ENCODE measurements at regions of chr11 and their contacts with region 1.

Region 1: GRCh38 chr11:62081378-62082291 is 42.2 kb upstream of the INCENP start:
- DNase-seq: peak; percentile 77
- CTCF ChIP-seq: peak; percentile 83

Region 2: GRCh38 chr11:61871158-61871597 is 210.5 kb before region 1 on chr11:
- CTCF ChIA-PET with region 1: interaction called, 57 read pairs
- POLR2A ChIA-PET with region 1: interaction called, 4 read pairs
- DNase-seq: peak; percentile 87
- CTCF ChIP-seq: peak; percentile 93

Region 3: GRCh38 chr11:61899146-61899841 is 182.3 kb before region 1 on chr11:
- CTCF ChIA-PET with region 1: interaction called, 424 read pairs
- POLR2A ChIA-PET with region 1: no interaction called
- DNase-seq: peak; percentile 95
- CTCF ChIP-seq: peak; percentile 100

Region 4: DNA sequence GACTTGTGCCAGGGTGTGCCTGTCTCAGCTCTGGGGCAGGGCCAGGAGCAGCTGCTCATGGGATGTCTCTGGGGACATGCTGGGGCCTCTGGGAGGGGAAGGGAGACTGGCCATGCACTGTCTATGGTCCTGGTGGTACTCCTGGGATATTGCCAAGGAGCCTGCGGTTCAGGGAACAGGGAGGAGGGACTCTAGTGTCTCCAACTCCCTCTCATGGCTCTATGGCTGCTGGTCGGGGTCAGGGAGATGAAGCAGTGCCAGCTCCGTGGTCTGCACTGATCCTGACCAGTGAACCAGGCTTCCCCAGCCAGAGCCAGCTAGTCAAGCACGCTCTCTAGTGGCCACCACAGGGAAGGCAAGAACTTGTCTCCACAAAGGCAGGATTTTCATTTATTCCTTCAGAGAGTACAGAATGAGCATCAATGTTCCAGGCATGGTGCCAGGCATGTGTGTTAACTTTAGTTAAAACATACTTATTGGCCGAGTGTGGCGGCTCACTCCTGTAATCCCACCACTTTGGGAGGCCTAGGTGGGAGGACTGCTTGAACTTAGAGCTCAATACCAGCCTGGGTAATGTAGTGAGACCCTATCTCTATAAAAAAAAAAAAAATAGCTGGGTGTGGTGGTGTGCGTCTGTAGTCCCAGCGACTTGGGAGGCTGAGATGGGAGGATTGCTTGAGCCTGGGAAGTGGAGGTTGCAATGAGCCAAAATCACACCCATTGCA is 134.0 kb before region 1 on chr11:
- CTCF ChIA-PET with region 1: interaction called, 104 read pairs
- POLR2A ChIA-PET with region 1: no interaction called
- DNase-seq: peak; percentile 87
- CTCF ChIP-seq: peak; percentile 94

Region 5: GRCh38 chr11:61985885-61986345 is 95.7 kb before region 1 on chr11:
- CTCF ChIA-PET with region 1: interaction called, 16 read pairs
- POLR2A ChIA-PET with region 1: no interaction called
- DNase-seq: no peak
- CTCF ChIP-seq: no peak

Region 6: DNA sequence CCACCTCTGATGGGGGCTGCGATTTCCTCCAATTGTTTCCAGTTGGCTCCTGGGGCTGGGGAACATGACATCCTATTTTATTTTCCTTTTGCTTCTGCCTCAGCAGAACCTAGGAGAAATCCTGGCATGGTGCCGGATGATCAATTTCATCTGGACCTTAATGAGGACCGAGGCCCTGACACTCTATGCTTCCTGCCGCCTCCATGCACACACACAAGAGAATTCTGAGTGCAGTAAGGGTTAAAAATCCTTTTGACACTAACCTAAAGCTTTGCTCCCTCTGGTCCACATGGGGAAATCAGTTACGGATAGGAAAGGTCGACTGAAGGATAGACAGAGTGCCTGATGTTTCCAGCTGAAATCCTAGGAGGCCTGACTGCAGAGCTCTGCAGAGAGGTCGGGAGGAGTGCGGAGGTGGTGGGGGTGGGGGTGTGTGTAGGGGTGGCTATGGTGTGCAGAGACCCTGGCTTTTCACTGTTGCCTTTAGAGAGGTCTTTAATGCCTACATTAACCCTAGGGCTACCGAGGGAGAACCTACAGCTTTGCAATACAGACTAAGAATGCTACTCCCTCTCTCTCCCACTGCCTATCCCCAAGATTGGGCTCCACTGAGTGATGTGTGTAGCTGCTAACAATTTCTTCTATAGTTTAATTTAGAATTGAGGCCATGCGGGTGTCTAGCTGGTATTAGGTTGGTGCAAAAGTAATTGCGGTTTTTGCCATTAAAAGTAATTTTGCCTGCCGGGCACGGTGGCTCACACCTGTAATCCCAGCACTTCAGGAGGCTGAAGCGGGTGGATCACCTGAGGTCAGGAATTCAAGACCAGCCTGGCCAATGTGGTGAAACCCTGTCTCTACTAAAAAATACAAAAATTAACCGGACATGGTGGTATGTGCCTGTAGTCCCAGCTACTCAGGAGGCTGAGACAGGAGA is 11.4 kb before region 1 on chr11:
- CTCF ChIA-PET with region 1: interaction called, 27 read pairs
- POLR2A ChIA-PET with region 1: no interaction called
- DNase-seq: no peak
- CTCF ChIP-seq: no peak

Measured in GM10248 (cell line).